ENCODE measurements at regions of chr14 and their contacts with region 1.

Region 1: DNA sequence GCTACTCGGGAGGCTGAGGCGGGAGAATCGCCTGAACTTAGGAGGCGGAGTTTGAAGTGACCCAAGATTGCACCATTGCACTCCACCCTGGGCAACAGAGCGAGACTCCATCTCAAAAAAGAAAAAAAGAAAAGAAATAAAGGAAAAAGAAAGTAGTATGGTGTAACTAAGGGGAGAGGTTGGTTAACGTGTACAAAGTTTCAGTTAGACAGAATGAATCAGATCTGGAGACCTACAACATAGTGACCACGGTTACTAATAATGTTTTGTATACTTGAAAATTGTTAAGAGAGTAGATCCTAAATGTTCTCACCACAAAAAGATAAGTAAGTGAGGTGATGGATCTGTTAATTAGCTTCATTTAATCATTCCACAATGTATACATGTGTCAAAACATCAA is 1208.8 kb downstream of the VRK1 start:
- DNase-seq: no peak
- H3K4me3 ChIP-seq: no peak overlapping the region
- H3K27ac ChIP-seq: no peak overlapping the region
- H3K4me1 ChIP-seq: no peaks in the 10 kb centered on the region
- H3K27me3 ChIP-seq: no peaks in the 10 kb centered on the region
- CTCF ChIP-seq: no peak
- EP300 ChIP-seq: no peak
- POLR2A ChIP-seq: no peak

Region 2: GRCh38 chr14:97970222-97970621 is 35.8 kb before region 1 on chr14:
- in situ Hi-C with region 1: no loop called
- intact Hi-C with region 1: no loop called
- DNase-seq: no peak
- H3K4me3 ChIP-seq: no peak overlapping the region
- H3K27ac ChIP-seq: no peak overlapping the region
- H3K4me1 ChIP-seq: peaks cover 0 to 2% (median 0%) of the 10 kb centered on the region in 4 donors
- H3K27me3 ChIP-seq: no peaks in the 10 kb centered on the region
- CTCF ChIP-seq: no peak
- EP300 ChIP-seq: no peak
- POLR2A ChIP-seq: no peak

Region 3: DNA sequence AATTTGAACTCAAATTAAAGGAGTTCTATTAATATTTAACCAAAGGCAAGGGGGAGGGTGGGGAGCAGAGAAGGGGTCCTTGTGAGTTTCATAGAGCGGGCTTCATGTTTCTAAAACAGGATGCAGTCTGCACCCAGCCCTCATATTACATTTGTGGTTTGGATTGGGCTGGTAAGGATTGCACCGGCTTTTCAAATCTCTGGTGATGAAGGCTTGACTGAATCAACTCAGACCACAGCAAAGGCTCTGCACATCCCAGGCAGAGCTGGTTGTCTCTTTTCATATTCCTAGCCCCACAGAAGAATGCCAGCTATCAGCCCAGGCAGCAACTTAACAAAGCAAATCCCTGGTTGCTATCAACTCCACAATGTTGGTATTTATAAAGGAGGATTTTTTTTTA is 12.6 kb after region 1 on chr14:
- in situ Hi-C with region 1: no loop called
- intact Hi-C with region 1: loop called (anchors 1 kb)
- DNase-seq: no peak
- H3K4me3 ChIP-seq: no peak overlapping the region
- H3K27ac ChIP-seq: no peak overlapping the region
- H3K4me1 ChIP-seq: no peaks in the 10 kb centered on the region
- H3K27me3 ChIP-seq: no peaks in the 10 kb centered on the region
- CTCF ChIP-seq: no peak
- EP300 ChIP-seq: no peak
- POLR2A ChIP-seq: no peak